PC-9 (cell line): ENCODE measurements at regions of chr18 and their contacts with region 1.

Region 1: DNA sequence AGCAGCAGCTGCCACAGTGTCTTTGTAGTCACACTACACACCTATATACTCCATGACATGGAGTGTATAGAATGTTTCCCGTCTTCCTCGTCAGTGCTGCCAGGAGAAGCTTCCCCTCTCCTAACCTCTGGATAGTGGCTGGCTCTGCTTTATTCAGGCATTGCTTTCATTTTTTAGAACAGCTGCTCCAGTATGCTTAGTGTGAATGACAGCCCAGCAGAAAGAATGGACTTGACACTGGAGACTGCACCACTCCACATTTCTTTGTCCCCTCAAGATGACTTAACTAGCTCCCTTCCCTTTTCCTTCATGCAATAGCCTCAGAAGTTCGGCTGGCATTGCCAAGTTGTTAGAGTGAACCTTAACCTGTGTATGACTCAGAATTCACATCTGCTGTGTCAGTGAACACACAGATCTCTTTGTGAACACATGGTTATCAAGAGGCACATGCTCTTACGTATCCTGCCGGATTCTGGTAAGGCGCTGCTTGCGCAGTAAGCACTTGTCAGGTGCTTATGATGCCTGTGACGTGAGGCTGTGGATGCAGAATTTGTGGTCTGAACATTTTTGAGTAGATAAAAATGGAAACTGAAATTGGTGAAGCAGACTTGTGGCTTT is 73.9 kb downstream of the NEDD4L start:
- DNase-seq: peak; percentile 25 to 93
- H3K4me3 ChIP-seq: no peak overlapping the region
- H3K27ac ChIP-seq: peak overlapping the region; percentile 75
- H3K4me1 ChIP-seq: peaks cover 40% of the 10 kb centered on the region
- H3K27me3 ChIP-seq: no peaks in the 10 kb centered on the region
- CTCF ChIP-seq: no peak

Region 2: GRCh38 chr18:57768537-57769326 is 349.2 kb before region 1 on chr18:
- CTCF ChIA-PET with region 1: interaction called, 11 read pairs
- POLR2A ChIA-PET with region 1: no interaction called
- intact Hi-C with region 1: no loop called
- DNase-seq: no peak
- H3K4me3 ChIP-seq: no peak overlapping the region
- H3K27ac ChIP-seq: 0 out of 2 replicates have a peak overlapping the region, but pooled peaks have one; percentile 17
- H3K4me1 ChIP-seq: peaks cover 54% of the 10 kb centered on the region
- H3K27me3 ChIP-seq: no peaks in the 10 kb centered on the region
- CTCF ChIP-seq: no peak

Region 3: DNA sequence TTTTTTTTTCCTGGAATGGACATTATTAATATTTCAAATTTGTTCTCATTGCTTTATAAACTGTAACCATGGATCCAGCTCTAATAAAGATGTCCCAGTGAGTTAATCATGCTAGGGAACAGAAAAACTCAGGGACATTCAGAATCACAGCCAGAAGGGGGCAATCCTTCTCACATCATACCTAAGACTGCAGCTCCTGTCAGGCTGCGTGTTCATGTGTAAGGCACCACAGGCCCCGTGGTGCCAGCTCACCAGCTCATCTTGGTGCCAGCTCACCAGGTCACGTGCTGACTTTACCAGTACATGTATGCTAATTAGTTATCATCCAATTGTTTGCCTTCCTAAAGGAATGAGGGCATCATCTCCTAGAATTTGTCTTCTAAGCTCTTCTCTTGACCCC is 158.6 kb before region 1 on chr18:
- CTCF ChIA-PET with region 1: interaction called, 5 read pairs
- POLR2A ChIA-PET with region 1: no interaction called
- intact Hi-C with region 1: loop called (anchors 2 kb)
- DNase-seq: peak; percentile 2 to 40
- H3K4me3 ChIP-seq: no peak overlapping the region
- H3K27ac ChIP-seq: no peak overlapping the region
- H3K4me1 ChIP-seq: no peaks in the 10 kb centered on the region
- H3K27me3 ChIP-seq: no peaks in the 10 kb centered on the region
- CTCF ChIP-seq: peak; percentile 58; the same call in 1 of the 2 replicates

Region 4: GRCh38 chr18:58087917-58088692 is 29.8 kb before region 1 on chr18:
- CTCF ChIA-PET with region 1: no interaction called
- POLR2A ChIA-PET with region 1: no interaction called
- intact Hi-C with region 1: loop called (anchors 1 kb)
- DNase-seq: peak; percentile 86 to 100
- H3K4me3 ChIP-seq: no peak overlapping the region; the same call in 1 of the 2 replicates
- H3K27ac ChIP-seq: peak overlapping the region; percentile 97
- H3K4me1 ChIP-seq: peaks cover 78% of the 10 kb centered on the region
- H3K27me3 ChIP-seq: no peaks in the 10 kb centered on the region
- CTCF ChIP-seq: no peak

Region 5: GRCh38 chr18:58180738-58181353 is 63.0 kb after region 1 on chr18:
- CTCF ChIA-PET with region 1: interaction called, 3 read pairs
- POLR2A ChIA-PET with region 1: no interaction called
- intact Hi-C with region 1: loop called (anchors 1 kb)
- DNase-seq: peak; percentile 43 to 52
- H3K4me3 ChIP-seq: no peak overlapping the region
- H3K27ac ChIP-seq: no peak overlapping the region
- H3K4me1 ChIP-seq: peaks cover 60% of the 10 kb centered on the region
- H3K27me3 ChIP-seq: no peaks in the 10 kb centered on the region
- CTCF ChIP-seq: peak; percentile 94

Region 6: DNA sequence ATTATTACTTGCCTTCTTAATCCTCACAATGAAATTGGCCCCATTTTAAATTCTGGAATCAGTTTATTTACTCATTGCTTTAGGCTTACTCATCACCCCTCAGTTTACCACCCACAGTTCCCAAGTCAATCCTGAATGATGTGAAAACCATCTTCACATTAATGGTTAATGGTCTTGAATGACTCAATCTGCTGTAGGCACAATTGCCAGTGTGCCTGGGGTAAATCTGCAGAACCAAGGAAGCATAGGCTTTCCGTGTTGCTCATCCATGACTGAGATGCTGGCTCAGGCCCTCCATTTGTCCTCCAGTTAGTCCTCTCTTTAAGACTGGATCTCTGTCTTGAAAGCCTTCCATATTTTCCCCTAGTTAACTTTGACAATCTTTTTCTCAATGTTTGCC is 1946.4 kb after region 1 on chr18:
- CTCF ChIA-PET with region 1: no interaction called
- POLR2A ChIA-PET with region 1: no interaction called
- intact Hi-C with region 1: no loop called
- DNase-seq: no peak
- H3K4me3 ChIP-seq: no peak overlapping the region
- H3K27ac ChIP-seq: no peak overlapping the region
- H3K4me1 ChIP-seq: no peaks in the 10 kb centered on the region
- H3K27me3 ChIP-seq: no peaks in the 10 kb centered on the region
- CTCF ChIP-seq: no peak